Mammary epithelial cell (primary cell): ENCODE measurements at regions of chr19 and their contacts with region 1.

Region 1: DNA sequence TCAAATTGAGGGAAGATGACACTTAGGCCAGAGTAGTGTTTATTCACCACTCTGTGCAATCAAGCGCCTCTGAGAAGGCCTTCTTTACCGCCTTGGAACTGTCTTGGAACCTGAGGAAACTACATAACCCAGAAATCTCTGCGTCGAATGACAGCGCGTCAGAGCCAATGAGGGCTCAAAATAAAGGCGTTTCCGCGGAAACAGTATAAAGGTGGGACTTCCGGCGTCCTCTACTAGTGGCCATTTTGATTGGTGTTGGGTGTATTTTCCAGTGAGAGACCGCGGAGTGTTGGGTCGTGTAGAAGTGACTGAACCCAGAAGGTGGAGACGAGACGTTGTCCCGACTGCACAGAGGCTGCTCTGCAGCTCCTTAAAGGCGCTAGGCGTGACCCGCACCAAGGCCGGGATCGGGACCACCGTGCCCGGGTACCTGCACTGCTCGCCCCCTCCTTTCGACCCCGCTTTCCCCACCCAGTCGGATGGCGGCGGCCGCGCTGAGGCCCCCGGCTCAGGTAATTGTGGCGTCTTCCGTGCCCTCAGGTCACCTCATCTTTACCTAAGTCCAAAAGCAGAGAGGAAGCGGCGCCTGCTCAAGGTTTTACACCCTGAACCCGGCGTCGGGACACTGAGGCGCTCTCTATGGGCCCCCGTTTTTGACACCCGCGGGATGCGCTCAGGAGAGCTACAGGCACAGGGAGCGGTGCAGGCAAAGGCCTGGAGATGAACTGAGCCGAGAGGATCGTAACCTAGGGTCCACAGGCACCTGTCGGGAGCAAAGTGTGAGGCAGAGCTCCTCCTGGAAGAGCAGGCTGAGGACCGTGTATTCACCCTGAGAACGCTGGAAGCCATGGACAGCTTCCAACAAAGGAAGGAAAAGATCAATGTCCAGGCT is at the start of gene ZNF776:
- DNase-seq: peak; percentile 90
- H3K4me3 ChIP-seq: peak within 1 kb of the TSS; percentile 78 to 96 (median 89)
- H3K27ac ChIP-seq: peak within 1 kb of the TSS; percentile 58
- H3K4me1 ChIP-seq: peaks cover 7% of the 10 kb centered on the region
- H3K27me3 ChIP-seq: no peaks in the 10 kb centered on the region
- CTCF ChIP-seq: no peak
- total RNA-seq, gene ZNF776: 7.7 to 13.0 TPM

Region 2: GRCh38 chr19:57803594-57804325 is 56.9 kb after region 1 on chr19:
- CTCF ChIA-PET with region 1: no interaction called
- dilution Hi-C with region 1: no loop called
- in situ Hi-C with region 1: no loop called
- intact Hi-C with region 1: loop called (anchors 5 kb)
- DNase-seq: peak; percentile 67
- H3K4me3 ChIP-seq: peak overlapping the region; percentile 61 to 88 (median 63)
- H3K27ac ChIP-seq: peak overlapping the region; percentile 87
- H3K4me1 ChIP-seq: peaks cover 45% of the 10 kb centered on the region
- H3K27me3 ChIP-seq: no peaks in the 10 kb centered on the region
- CTCF ChIP-seq: no peak

Region 3: GRCh38 chr19:57819475-57820148 is 72.8 kb after region 1 on chr19:
- CTCF ChIA-PET with region 1: no interaction called
- dilution Hi-C with region 1: no loop called
- in situ Hi-C with region 1: no loop called
- intact Hi-C with region 1: loop called (anchors 2 kb)
- DNase-seq: peak; percentile 93
- H3K4me3 ChIP-seq: peak overlapping the region; percentile 83 to 89 (median 85)
- H3K27ac ChIP-seq: peak overlapping the region; percentile 75
- H3K4me1 ChIP-seq: peaks cover 10% of the 10 kb centered on the region
- H3K27me3 ChIP-seq: no peaks in the 10 kb centered on the region
- CTCF ChIP-seq: no peak

Region 4: DNA sequence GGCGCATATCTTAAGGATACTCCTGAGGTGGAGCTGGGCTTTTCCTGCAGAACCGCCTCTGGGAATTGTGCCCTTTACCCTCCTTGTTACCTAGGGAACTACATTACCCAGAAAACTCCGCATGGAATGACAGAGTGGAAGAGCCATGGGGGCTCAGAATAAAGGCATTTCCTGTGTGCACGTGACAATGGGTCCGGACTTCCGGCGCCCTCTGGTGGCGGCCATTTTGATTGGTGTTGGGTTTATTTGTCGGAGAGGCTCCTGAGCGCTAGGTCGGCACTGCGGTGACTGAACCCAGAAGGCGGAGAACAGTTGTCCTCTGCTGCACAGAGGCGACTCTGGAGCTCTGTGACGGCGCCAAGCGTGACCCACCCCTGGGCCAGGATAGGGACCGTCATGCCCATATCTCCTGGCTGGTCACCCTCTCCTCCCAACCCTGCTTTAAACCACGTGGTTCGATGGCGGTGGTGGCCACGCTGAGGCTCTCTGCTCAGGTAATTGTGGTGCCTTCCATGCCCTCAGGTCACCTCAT is 83.3 kb after region 1 on chr19 and contains the start of gene ZNF587B:
- CTCF ChIA-PET with region 1: no interaction called
- dilution Hi-C with region 1: no loop called
- in situ Hi-C with region 1: loop called in 1 of 2 experiments (anchors 25 kb)
- intact Hi-C with region 1: no loop called
- DNase-seq: peak; percentile 42
- H3K4me3 ChIP-seq: peak within 1 kb of the TSS; percentile 26 to 56 (median 37)
- H3K27ac ChIP-seq: peak within 1 kb of the TSS; percentile 14
- H3K4me1 ChIP-seq: no peaks in the 10 kb centered on the region
- H3K27me3 ChIP-seq: no peaks in the 10 kb centered on the region
- CTCF ChIP-seq: peak in 1 of 2 donors; percentile 53
- total RNA-seq, gene ZNF587B: 16.1 to 27.2 TPM